CD14-positive monocyte (primary cell): ENCODE measurements at regions of chr3 and their contacts with region 1.

Region 1: GRCh38 chr3:58317811-58318210 is 11.5 kb downstream of the HTD2 start:
- DNase-seq: peak in 1 of 3 donors; percentile 18
- H3K4me3 ChIP-seq: no peak overlapping the region
- H3K4me3 Mint-ChIP-seq: no peak overlapping the region
- H3K27ac ChIP-seq: peak overlapping the region; percentile 22 to 47
- H3K27ac Mint-ChIP-seq: peak overlapping the region; percentile 67 to 81 (median 77)
- H3K4me1 ChIP-seq: peaks cover 15 to 17% of the 10 kb centered on the region in 2 donors
- H3K4me1 Mint-ChIP-seq: peaks cover 19% of the 10 kb centered on the region
- H3K27me3 ChIP-seq: no peaks in the 10 kb centered on the region
- H3K27me3 Mint-ChIP-seq: peaks cover 0 to 2% (median 0%) of the 10 kb centered on the region in 3 donors
- CTCF ChIP-seq: no peak

Region 2: GRCh38 chr3:58630076-58630709 is 312.4 kb after region 1 on chr3:
- intact Hi-C with region 1: loop called in 1 of 2 experiments (anchors 10 kb)
- DNase-seq: peak; percentile 25 to 65 (median 52)
- H3K4me3 ChIP-seq: no peak overlapping the region
- H3K4me3 Mint-ChIP-seq: no peak overlapping the region
- H3K27ac ChIP-seq: no peak overlapping the region
- H3K27ac Mint-ChIP-seq: no peak overlapping the region
- H3K4me1 ChIP-seq: no peaks in the 10 kb centered on the region
- H3K4me1 Mint-ChIP-seq: no peaks in the 10 kb centered on the region
- H3K27me3 ChIP-seq: no peaks in the 10 kb centered on the region
- H3K27me3 Mint-ChIP-seq: peaks cover 3 to 5% (median 4%) of the 10 kb centered on the region in 3 donors
- CTCF ChIP-seq: peak; percentile 95